GM12878 (cell line): ENCODE measurements at regions of chr11 and their contacts with region 1.

Region 1: GRCh38 chr11:57644748-57645688 is 4.7 kb downstream of the YPEL4 start:
- DNase-seq: no peak
- ATAC-seq: peak; percentile 85
- H3K4me3 ChIP-seq: no peak overlapping the region
- H3K27ac ChIP-seq: no peak overlapping the region
- H3K4me1 ChIP-seq: peaks cover 12% of the 10 kb centered on the region
- H3K27me3 ChIP-seq: peaks cover 10 to 17% of the 10 kb centered on the region in 2 experiments
- CTCF ChIP-seq: peak; percentile 73 to 85 (median 85)
- EP300 ChIP-seq: no peak
- POLR2A ChIP-seq: no peak
- RAD21 ChIP-seq: peak; percentile 93

Region 2: GRCh38 chr11:57345555-57346211 is 299.3 kb before region 1 on chr11:
- CTCF ChIA-PET with region 1: interaction called, 36 read pairs
- POLR2A ChIA-PET with region 1: no interaction called
- RAD21 ChIA-PET with region 1: interaction called, 17 read pairs
- SMC1A ChIA-PET with region 1: interaction called, 4 read pairs
- in situ Hi-C with region 1: loop called (anchors 5 kb)
- intact Hi-C with region 1: loop called (anchors 1 kb)
- DNase-seq: no peak
- ATAC-seq: peak; percentile 83
- H3K4me3 ChIP-seq: no peak overlapping the region
- H3K27ac ChIP-seq: no peak overlapping the region
- H3K4me1 ChIP-seq: no peaks in the 10 kb centered on the region; the same call in 1 of the 2 replicates
- H3K27me3 ChIP-seq: peaks cover 0 to 4% of the 10 kb centered on the region in 2 experiments; a peak in 1 of 4 replicates
- CTCF ChIP-seq: peak; percentile 66 to 77 (median 75); a peak in 5 of 6 replicates
- EP300 ChIP-seq: no peak
- POLR2A ChIP-seq: no peak
- RAD21 ChIP-seq: peak; percentile 76

Region 3: DNA sequence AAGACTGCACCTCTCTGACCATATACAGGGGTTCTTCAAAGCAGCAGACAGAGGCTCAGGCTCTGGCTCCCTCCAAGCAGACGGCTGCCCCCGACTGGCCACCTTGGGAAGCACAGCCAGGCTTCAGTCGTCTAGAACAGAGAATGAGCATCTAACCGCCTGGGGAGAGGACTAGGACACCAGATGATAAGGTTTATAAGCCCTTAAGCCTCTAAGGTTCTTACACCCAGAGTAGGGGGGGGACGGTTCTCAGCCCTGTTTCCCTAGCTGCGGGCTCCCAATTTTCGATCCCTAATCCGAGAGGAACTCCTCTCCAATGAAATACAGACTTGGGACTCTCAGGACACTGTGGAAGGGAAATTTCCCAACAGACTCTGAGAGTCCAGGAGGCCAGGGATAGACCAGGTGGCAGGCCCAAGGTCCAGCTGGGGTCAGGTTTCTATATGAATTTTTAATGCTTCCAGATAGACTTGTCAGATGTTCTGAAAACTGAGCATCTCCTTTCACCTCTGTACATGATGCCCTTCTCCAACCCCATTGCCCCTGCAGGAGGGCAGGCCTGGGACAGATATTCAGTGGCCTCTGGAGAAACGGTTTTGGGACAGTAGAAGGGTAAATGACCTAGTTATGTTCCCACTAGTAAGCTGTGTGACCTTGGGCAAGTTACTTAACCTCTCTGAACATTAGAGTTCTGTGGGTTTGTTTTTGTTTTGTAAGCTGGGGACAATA is 164.4 kb before region 1 on chr11:
- CTCF ChIA-PET with region 1: interaction called, 14 read pairs
- POLR2A ChIA-PET with region 1: no interaction called
- RAD21 ChIA-PET with region 1: interaction called, 6 read pairs
- SMC1A ChIA-PET with region 1: interaction called, 6 read pairs
- in situ Hi-C with region 1: no loop called
- intact Hi-C with region 1: no loop called
- DNase-seq: no peak
- ATAC-seq: peak; percentile 48
- H3K4me3 ChIP-seq: no peak overlapping the region
- H3K27ac ChIP-seq: no peak overlapping the region
- H3K4me1 ChIP-seq: peaks cover 26% of the 10 kb centered on the region
- H3K27me3 ChIP-seq: no peaks in the 10 kb centered on the region
- CTCF ChIP-seq: peak; percentile 71 to 91 (median 86)
- EP300 ChIP-seq: no peak
- POLR2A ChIP-seq: no peak
- RAD21 ChIP-seq: peak; percentile 59

Region 4: GRCh38 chr11:57546869-57547475 is 98.0 kb before region 1 on chr11:
- CTCF ChIA-PET with region 1: interaction called, 19 read pairs
- POLR2A ChIA-PET with region 1: interaction called, 3 read pairs
- RAD21 ChIA-PET with region 1: no interaction called
- SMC1A ChIA-PET with region 1: interaction called, 5 read pairs
- in situ Hi-C with region 1: no loop called
- intact Hi-C with region 1: no loop called
- DNase-seq: no peak
- ATAC-seq: peak; percentile 82
- H3K4me3 ChIP-seq: no peak overlapping the region
- H3K27ac ChIP-seq: peak overlapping the region; percentile 48
- H3K4me1 ChIP-seq: peaks cover 15% of the 10 kb centered on the region
- H3K27me3 ChIP-seq: no peaks in the 10 kb centered on the region
- CTCF ChIP-seq: no peak
- EP300 ChIP-seq: 0 out of 4 replicates have a peak, but pooled peaks of 1 of the 2 experiments have one; percentile 15
- POLR2A ChIP-seq: no peak
- RAD21 ChIP-seq: no peak

Region 5: DNA sequence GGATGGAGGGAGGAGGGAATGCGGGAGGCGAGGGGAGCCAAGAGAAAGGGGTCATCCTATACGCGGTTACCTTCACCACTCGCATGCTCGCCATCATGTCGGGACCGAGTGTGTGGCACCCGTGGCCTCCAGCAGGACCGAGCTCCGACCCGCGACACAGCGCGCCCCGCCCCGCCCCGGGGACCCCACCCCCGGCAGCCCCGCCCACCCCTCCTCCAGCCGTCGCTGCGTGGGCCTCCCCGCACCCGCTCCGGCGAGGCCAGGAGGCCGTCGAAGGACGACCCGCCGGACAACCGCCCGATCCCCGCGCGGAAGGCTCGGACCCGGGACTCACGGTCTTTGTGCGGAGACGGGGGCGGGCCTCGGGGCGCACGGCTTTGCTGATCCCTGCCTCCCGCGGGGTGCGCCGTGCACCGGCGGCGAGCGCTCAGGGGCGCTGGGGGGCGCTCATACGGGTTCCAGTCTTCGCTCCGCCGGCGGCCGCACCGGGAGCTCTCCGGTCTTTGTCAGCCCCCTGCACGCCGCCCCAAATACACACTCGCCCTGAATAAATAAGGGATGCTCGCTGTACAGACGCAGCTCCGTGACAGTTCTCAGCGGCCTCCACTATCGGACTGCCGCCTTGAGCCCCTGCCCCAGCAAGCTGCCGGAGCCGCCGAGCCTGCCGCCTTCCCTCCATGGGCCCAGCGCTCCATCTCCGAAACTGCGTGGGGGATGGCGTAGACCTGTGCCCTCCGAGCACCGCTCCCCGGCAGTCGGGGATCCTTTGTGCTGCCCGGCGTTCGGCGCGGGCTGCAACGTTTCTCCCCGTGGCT is 77.3 kb before region 1 on chr11 and contains the start of gene UBE2L6:
- CTCF ChIA-PET with region 1: interaction called, 319 read pairs
- POLR2A ChIA-PET with region 1: interaction called, 7 read pairs
- RAD21 ChIA-PET with region 1: interaction called, 83 read pairs
- SMC1A ChIA-PET with region 1: interaction called, 32 read pairs
- in situ Hi-C with region 1: loop called (anchors 5 kb)
- intact Hi-C with region 1: loop called (anchors 1 kb)
- DNase-seq: no peak
- ATAC-seq: peak; percentile 84
- H3K4me3 ChIP-seq: peak within 1 kb of the TSS; percentile 100
- H3K27ac ChIP-seq: peak within 1 kb of the TSS; percentile 87
- H3K4me1 ChIP-seq: peaks cover 4% of the 10 kb centered on the region
- H3K27me3 ChIP-seq: no peaks in the 10 kb centered on the region
- CTCF ChIP-seq: peak in 2 of 3 experiments; percentile 43 to 66; a peak in 3 of 6 replicates
- EP300 ChIP-seq: no peak
- POLR2A ChIP-seq: peak; percentile 59
- RAD21 ChIP-seq: no peak
- polyA plus RNA-seq, gene UBE2L6: 262 to 295 TPM

Region 6: GRCh38 chr11:57626895-57627294 is 18.1 kb before region 1 on chr11:
- CTCF ChIA-PET with region 1: interaction called, 15 read pairs
- POLR2A ChIA-PET with region 1: no interaction called
- RAD21 ChIA-PET with region 1: interaction called, 3 read pairs
- SMC1A ChIA-PET with region 1: interaction called, 6 read pairs
- in situ Hi-C with region 1: no loop called
- intact Hi-C with region 1: no loop called
- DNase-seq: no peak
- ATAC-seq: no peak
- H3K4me3 ChIP-seq: no peak overlapping the region
- H3K27ac ChIP-seq: no peak overlapping the region
- H3K4me1 ChIP-seq: no peaks in the 10 kb centered on the region
- H3K27me3 ChIP-seq: no peaks in the 10 kb centered on the region; a peak in 1 of 4 replicates
- CTCF ChIP-seq: no peak
- EP300 ChIP-seq: no peak
- POLR2A ChIP-seq: no peak
- RAD21 ChIP-seq: no peak

Region 7: GRCh38 chr11:57657194-57658022 is 12.4 kb after region 1 on chr11 and contains the start of gene CLP1:
- CTCF ChIA-PET with region 1: interaction called, 34 read pairs
- POLR2A ChIA-PET with region 1: interaction called, 3 read pairs
- RAD21 ChIA-PET with region 1: interaction called, 3 read pairs
- SMC1A ChIA-PET with region 1: interaction called, 4 read pairs
- in situ Hi-C with region 1: no loop called
- intact Hi-C with region 1: no loop called
- DNase-seq: peak; percentile 94
- ATAC-seq: peak; percentile 99
- H3K4me3 ChIP-seq: peak within 1 kb of the TSS; percentile 91
- H3K27ac ChIP-seq: peak within 1 kb of the TSS; percentile 75
- H3K4me1 ChIP-seq: peaks cover 6% of the 10 kb centered on the region; the same call in 1 of the 2 replicates
- H3K27me3 ChIP-seq: no peaks in the 10 kb centered on the region
- CTCF ChIP-seq: no peak
- EP300 ChIP-seq: no peak
- POLR2A ChIP-seq: peak; percentile 81
- RAD21 ChIP-seq: no peak
- polyA plus RNA-seq, gene CLP1: 33.6 to 45.7 TPM

Region 8: GRCh38 chr11:57885298-57886050 is 240.5 kb after region 1 on chr11:
- CTCF ChIA-PET with region 1: no interaction called
- POLR2A ChIA-PET with region 1: no interaction called
- RAD21 ChIA-PET with region 1: no interaction called
- SMC1A ChIA-PET with region 1: no interaction called
- in situ Hi-C with region 1: no loop called
- intact Hi-C with region 1: no loop called
- DNase-seq: no peak
- ATAC-seq: no peak
- H3K4me3 ChIP-seq: no peak overlapping the region
- H3K27ac ChIP-seq: no peak overlapping the region
- H3K4me1 ChIP-seq: no peaks in the 10 kb centered on the region
- H3K27me3 ChIP-seq: no peaks in the 10 kb centered on the region
- CTCF ChIP-seq: no peak
- EP300 ChIP-seq: no peak
- POLR2A ChIP-seq: no peak
- RAD21 ChIP-seq: no peak